AG04449 (cell line): ENCODE measurements at regions of chr1 and their contacts with region 1.

Region 1: GRCh38 chr1:218299416-218299815 is 14.3 kb downstream of the RRP15 start:
- DNase-seq: peak; percentile 23
- H3K4me3 ChIP-seq: no peak overlapping the region
- CTCF ChIP-seq: peak; percentile 60

Region 2: GRCh38 chr1:218284934-218285635 is 14.3 kb before region 1 on chr1 and contains the start of gene RRP15:
- CTCF ChIA-PET with region 1: interaction called, 22 read pairs
- POLR2A ChIA-PET with region 1: interaction called, 3 read pairs
- DNase-seq: peak; percentile 42
- H3K4me3 ChIP-seq: peak within 1 kb of the TSS; percentile 99
- CTCF ChIP-seq: no peak

Region 3: DNA sequence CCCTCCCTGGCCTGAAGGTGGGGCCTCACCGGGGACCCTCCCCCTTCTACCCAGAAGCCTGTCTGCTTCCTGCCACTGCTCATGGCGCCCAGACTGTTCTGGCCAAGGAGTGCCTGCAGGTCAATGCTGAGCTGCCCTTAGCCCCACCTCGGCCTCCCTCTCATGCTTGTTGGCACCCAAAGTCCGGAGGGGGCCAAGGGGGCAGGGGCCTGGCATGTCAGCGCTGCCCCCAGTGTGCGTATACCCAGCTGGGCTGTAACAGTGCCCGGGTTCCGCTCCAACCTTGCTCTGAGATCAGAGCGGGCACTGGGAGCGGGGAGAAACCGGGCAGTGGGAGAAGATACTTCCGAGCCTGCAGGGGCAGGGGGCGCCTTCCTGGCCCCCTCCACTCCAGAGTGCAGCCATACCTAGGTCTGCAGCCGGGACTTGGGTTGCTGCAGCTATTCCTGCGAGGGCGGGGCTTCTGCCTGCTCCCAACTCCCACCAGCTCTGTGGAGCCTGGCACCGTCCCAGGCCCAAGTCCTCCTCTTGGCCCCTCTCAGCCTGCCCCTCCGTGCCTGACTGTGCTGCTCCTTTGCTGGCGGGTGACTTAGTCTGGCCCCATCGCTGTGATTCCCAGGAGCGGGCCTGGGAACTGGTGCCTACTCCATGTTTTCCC is 24.3 kb after region 1 on chr1:
- CTCF ChIA-PET with region 1: interaction called, 14 read pairs
- POLR2A ChIA-PET with region 1: no interaction called
- DNase-seq: no peak
- H3K4me3 ChIP-seq: no peak overlapping the region
- CTCF ChIP-seq: no peak

Region 4: GRCh38 chr1:218384581-218384993 is 85.2 kb after region 1 on chr1:
- CTCF ChIA-PET with region 1: no interaction called
- POLR2A ChIA-PET with region 1: no interaction called
- DNase-seq: no peak
- H3K4me3 ChIP-seq: no peak overlapping the region
- CTCF ChIP-seq: no peak

Region 5: GRCh38 chr1:218447010-218447689 is 147.7 kb after region 1 on chr1:
- CTCF ChIA-PET with region 1: no interaction called
- POLR2A ChIA-PET with region 1: no interaction called
- DNase-seq: no peak
- H3K4me3 ChIP-seq: no peak overlapping the region
- CTCF ChIP-seq: no peak

Region 6: GRCh38 chr1:219566951-219567947 is 1267.8 kb after region 1 on chr1:
- CTCF ChIA-PET with region 1: interaction called, 18 read pairs
- POLR2A ChIA-PET with region 1: no interaction called
- DNase-seq: no peak
- H3K4me3 ChIP-seq: no peak overlapping the region
- CTCF ChIP-seq: peak; percentile 62

Region 7: GRCh38 chr1:219812491-219813203 is 1513.2 kb after region 1 on chr1:
- CTCF ChIA-PET with region 1: interaction called, 15 read pairs
- POLR2A ChIA-PET with region 1: no interaction called
- DNase-seq: peak; percentile 17
- H3K4me3 ChIP-seq: no peak overlapping the region
- CTCF ChIP-seq: peak; percentile 76